Activated CD4-positive, alpha-beta memory T cell treated with anti-CD3 and anti-CD28 coated beads for 36 hours (primary cell): ENCODE measurements at regions of chr17 and their contacts with region 1.

Region 1: DNA sequence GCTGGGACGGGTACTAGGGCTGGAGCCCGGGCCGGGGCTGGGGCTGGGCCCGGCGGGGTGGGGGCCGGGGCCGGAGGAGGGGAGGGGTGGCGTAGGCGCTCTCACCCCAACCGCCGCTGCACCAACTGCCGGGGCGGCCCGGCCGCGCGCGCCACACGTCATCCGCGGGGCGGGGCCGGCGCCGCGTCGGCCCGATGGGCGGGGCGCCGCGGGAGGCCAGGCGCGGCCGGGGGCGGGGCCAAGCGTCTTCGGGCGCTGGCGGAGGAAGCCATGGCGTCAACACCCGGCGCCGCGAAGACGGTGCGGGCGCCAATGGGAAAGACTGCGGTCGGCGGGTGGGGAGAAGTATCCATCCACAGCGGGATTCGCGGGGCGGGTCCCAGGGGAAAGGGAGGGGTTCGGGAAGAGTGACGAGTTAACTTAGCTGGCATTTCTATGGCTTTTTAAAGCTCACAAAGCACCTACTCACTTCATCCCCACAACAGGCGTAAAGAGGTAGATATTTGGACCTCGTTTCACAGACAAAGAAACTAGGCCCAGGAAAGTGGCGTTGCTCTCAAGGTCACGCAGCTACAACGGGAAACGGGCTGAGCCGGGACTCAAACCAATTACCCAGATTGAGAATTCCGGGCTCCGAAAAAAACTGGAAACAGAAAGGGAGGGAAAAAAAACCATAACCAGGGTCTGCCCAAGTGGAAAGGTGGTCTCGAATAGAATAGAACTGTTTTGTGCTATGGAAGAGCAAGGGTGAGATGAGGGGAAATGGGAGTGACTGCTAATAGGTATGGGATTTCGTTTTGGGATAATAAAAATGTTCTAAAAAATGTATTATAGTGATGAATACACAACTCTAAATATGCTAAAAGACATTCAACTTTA is at the start of gene SPAG9:
- DNase-seq: peak; percentile 94
- H3K4me3 Mint-ChIP-seq: peak within 1 kb of the TSS; percentile 94
- H3K27ac Mint-ChIP-seq: peak within 1 kb of the TSS; percentile 98
- H3K4me1 Mint-ChIP-seq: peaks cover 43% of the 10 kb centered on the region
- H3K27me3 Mint-ChIP-seq: no peaks in the 10 kb centered on the region
- total RNA-seq, gene SPAG9: 58.0 to 58.7 TPM

Region 2: GRCh38 chr17:51085185-51085805 is 35.7 kb before region 1 on chr17:
- CTCF ChIA-PET with region 1: interaction called, 3 read pairs
- POLR2A ChIA-PET with region 1: interaction called, 6 read pairs
- intact Hi-C with region 1: loop called (anchors 2 kb)
- DNase-seq: no peak
- H3K4me3 Mint-ChIP-seq: no peak overlapping the region
- H3K27ac Mint-ChIP-seq: peak overlapping the region; percentile 51
- H3K4me1 Mint-ChIP-seq: peaks cover 27% of the 10 kb centered on the region
- H3K27me3 Mint-ChIP-seq: no peaks in the 10 kb centered on the region

Region 3: DNA sequence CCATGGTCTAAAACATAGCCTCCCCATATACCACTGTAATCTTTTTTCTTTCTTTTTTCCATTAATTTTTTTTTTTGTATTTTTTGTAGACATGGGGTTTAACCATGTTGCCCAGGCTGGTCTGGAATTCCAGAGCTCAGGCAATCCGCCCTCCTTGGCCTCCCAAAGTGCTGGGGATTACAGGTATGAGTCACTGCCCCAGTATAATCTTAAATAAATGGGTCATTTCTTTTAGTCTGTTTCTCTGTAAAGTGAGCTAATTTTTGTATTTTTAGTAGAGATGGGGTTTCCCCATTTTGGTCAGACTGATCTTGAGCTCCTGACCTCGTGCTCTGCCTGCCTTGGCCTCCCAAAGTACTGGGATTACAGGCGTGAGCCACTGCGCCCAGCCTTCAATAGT is 26.7 kb after region 1 on chr17:
- CTCF ChIA-PET with region 1: interaction called, 31 read pairs
- POLR2A ChIA-PET with region 1: interaction called, 16 read pairs
- intact Hi-C with region 1: loop called (anchors 1 kb)
- DNase-seq: peak; percentile 49
- H3K4me3 Mint-ChIP-seq: no peak overlapping the region
- H3K27ac Mint-ChIP-seq: peak overlapping the region; percentile 13
- H3K4me1 Mint-ChIP-seq: peaks cover 21% of the 10 kb centered on the region
- H3K27me3 Mint-ChIP-seq: no peaks in the 10 kb centered on the region

Region 4: GRCh38 chr17:51166197-51166986 is 45.4 kb after region 1 on chr17 and contains the start of gene NME2:
- CTCF ChIA-PET with region 1: interaction called, 3 read pairs
- POLR2A ChIA-PET with region 1: no interaction called
- intact Hi-C with region 1: loop called (anchors 1 kb)
- DNase-seq: peak; percentile 77
- H3K4me3 Mint-ChIP-seq: peak within 1 kb of the TSS; percentile 82
- H3K27ac Mint-ChIP-seq: peak within 1 kb of the TSS; percentile 89
- H3K4me1 Mint-ChIP-seq: peaks cover 29% of the 10 kb centered on the region
- H3K27me3 Mint-ChIP-seq: no peaks in the 10 kb centered on the region
- total RNA-seq, gene NME2: 790 to 814 TPM